Posterior vena cava (tissue), 2 donors: ENCODE measurements at regions of chr1 and their contacts with region 1.

Region 1: GRCh38 chr1:4587721-4588120 is 66.7 kb upstream of the AJAP1 start:
- DNase-seq: no peak

Region 2: DNA sequence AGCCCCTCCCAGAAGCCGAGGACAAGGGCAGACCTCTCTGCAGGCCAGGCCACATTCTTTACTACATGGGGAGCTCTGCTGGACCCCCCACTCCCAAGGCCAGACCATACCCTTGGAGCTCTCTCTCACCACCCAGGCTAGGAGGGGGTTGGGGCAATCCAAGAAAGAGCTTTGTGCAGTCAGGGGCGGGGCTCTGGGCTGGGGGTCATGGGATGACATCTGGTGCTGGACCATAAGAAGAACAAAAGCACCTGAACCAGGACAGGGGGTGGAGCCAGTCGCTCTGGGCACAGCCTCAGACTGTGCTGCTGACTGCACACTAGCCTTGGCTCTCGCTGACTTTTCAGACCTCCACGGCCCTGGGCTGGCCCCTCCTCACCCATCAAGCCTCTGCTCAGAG is 43.6 kb after region 1 on chr1:
- intact Hi-C with region 1: loop called in 1 of 2 experiments (anchors 1 kb)
- DNase-seq: no peak